ENCODE measurements at regions of chr4 and their contacts with region 1.

Region 1: DNA sequence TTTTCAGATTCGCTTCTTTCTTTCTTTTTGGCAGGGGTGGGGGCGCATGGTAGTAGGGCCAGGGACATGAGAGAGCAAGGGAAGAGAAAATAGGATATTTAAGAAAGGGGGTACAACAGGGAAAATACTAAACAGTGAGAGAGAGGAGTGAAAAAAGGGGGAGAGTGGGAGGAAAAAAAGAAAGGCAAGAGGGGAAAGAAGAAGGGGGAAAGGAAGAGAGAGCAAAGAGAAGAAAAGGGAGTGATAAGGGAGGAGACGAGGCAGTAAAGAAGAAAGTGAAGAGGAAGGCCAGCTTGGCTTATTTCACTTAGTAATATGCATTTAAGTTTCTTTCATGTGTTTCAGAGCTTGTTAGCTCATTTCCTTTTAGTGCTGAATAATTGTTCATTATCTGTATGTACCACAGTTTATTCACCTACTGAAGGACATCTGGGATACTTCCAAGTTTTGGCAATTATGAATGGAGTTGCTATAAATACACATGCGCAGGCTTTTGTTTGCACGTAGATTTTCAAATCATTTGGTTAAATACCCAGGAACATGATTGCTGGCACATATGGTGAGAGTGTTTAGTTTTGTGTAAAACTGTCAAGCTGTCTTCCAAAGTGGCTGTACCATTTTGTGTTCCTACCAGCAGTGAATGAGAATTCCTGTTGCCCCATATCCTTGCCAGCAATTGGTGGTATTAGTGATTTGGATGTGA is 37.3 kb downstream of the CASP6 start:
- DNase-seq: no peak
- H3K4me3 Mint-ChIP-seq: no peak overlapping the region
- H3K27ac Mint-ChIP-seq: no peak overlapping the region
- H3K4me1 Mint-ChIP-seq: peaks cover 48% of the 10 kb centered on the region
- H3K27me3 Mint-ChIP-seq: no peaks in the 10 kb centered on the region

Region 2: DNA sequence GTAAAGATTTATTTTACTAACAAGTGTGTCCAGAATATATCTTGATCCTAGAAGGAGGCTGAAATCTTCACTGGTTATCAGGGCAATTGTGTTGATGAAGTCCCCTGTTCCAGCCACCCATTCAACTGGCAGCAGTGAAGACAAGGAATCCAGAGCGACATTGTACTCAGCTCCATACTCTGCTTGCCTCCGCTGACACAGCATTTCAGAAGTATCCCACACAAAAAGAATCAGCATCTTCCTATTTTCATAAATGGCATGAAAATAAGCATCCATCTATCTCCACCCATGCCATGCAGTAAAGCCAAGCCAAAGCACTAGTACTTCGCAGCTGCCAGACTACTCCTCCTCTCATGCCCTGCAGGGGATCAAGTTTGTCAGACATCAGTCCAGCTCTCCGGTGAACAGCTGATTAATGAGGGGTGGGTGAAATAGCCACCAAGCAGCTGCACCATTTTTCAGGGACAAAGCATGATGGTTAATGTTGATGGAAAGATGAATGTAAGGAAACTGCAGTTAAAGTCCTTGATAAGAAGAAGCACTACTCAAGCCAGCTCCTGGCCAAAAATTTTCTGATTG is 417.5 kb before region 1 on chr4:
- CTCF ChIA-PET with region 1: no interaction called
- POLR2A ChIA-PET with region 1: no interaction called
- intact Hi-C with region 1: no loop called
- DNase-seq: no peak
- H3K4me3 Mint-ChIP-seq: no peak overlapping the region
- H3K27ac Mint-ChIP-seq: no peak overlapping the region
- H3K4me1 Mint-ChIP-seq: no peaks in the 10 kb centered on the region
- H3K27me3 Mint-ChIP-seq: no peaks in the 10 kb centered on the region

Region 3: GRCh38 chr4:109640644-109641043 is 25.3 kb before region 1 on chr4:
- CTCF ChIA-PET with region 1: no interaction called
- POLR2A ChIA-PET with region 1: no interaction called
- intact Hi-C with region 1: no loop called
- DNase-seq: no peak
- H3K4me3 Mint-ChIP-seq: no peak overlapping the region
- H3K27ac Mint-ChIP-seq: peak overlapping the region; percentile 63
- H3K4me1 Mint-ChIP-seq: peaks cover 42% of the 10 kb centered on the region
- H3K27me3 Mint-ChIP-seq: no peaks in the 10 kb centered on the region

Region 4: DNA sequence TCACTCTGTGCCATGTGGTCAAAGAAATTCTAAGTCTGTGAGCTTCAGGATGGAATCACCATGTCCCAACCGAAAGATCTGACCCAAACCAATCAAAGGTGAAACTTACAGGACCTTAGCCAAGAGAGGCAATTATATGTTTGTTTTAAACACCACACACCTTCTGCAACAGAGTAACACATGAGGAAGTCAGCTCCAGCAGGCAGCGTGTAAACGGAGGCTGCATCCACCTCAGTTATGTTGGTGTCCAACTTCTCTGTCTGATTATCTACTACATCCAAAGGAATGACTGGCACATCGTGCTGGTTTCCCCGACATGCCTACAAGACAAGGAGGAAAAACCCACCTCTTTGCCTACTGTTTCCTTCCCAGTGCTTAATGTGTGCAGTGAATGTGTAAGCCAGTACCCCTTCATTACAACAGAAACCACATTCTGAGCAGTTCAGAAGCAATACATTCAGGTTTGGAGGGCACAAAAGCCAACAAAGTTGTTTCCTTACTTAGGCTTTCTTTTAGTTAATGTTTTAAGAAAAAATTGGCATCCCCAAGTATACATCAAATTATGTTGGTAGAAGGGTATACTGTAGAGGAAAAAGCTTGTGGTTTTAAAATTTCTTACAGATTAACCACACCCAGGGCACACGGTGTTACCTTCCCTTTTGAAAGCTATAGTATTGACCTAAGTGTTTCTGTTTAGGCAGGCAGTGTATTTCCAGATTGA is 24.9 kb after region 1 on chr4:
- CTCF ChIA-PET with region 1: no interaction called
- POLR2A ChIA-PET with region 1: no interaction called
- intact Hi-C with region 1: no loop called
- DNase-seq: no peak
- H3K4me3 Mint-ChIP-seq: no peak overlapping the region
- H3K27ac Mint-ChIP-seq: peak overlapping the region; percentile 47
- H3K4me1 Mint-ChIP-seq: peaks cover 28% of the 10 kb centered on the region
- H3K27me3 Mint-ChIP-seq: no peaks in the 10 kb centered on the region

Region 5: DNA sequence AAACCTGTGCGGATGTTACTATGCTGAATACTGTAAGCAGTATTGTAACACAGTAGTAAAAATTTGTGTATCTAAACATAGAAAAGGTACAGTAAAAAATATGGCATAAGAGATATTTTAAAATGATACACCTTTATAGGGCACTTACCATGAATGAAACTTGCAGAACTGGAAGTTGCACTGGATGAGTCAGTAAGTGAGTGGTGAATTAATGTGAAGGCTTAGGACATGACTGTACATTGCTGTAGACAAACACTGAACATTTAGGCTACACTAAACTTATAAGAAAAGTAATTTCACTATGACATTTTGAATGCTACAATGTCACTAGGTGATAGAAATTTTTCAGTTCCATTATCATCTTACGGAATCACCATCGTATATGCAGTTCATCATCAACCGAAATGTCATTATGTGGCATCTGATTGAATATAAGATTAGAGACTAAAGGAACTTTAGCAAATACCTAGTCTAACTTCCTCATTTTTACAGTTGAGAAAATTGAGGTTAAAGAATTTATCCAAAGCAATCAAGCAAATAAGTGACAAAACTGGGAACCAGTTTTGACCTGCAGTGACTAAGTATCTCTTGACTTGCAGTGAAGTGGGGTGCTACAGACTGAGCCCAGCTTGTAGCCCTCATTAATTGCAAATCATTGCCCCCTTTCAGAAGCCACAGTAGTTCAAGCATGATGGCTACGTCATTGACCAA is 302.0 kb after region 1 on chr4:
- CTCF ChIA-PET with region 1: no interaction called
- POLR2A ChIA-PET with region 1: no interaction called
- intact Hi-C with region 1: loop called (anchors 10 kb)
- DNase-seq: no peak
- H3K4me3 Mint-ChIP-seq: no peak overlapping the region
- H3K27ac Mint-ChIP-seq: no peak overlapping the region
- H3K4me1 Mint-ChIP-seq: peaks cover 7% of the 10 kb centered on the region
- H3K27me3 Mint-ChIP-seq: peaks cover 24% of the 10 kb centered on the region

Region 6: DNA sequence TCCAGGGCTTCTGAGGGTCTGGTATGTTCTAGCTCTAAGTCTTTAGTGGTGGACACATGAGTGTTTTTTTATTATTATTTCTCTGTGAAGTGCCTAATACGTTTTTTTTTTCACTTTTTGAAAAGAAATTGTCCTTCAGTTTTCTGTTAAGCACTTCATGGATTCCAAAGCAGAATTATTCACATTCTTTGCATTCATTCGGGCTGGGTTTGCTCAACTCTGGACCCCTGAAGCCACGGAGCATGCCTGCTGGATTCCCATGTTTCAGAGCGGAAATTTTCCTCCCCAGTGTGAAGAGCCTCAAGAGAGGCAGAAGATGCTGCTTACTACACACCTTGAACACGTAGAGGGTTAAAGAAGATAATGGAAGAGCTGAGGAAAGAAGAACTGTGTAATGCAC is 354.2 kb after region 1 on chr4:
- CTCF ChIA-PET with region 1: no interaction called
- POLR2A ChIA-PET with region 1: no interaction called
- intact Hi-C with region 1: no loop called
- DNase-seq: no peak
- H3K4me3 Mint-ChIP-seq: no peak overlapping the region
- H3K27ac Mint-ChIP-seq: no peak overlapping the region
- H3K4me1 Mint-ChIP-seq: peaks cover 8% of the 10 kb centered on the region
- H3K27me3 Mint-ChIP-seq: no peaks in the 10 kb centered on the region